ENCODE measurements at regions of chr3 and their contacts with region 1.

Region 1: DNA sequence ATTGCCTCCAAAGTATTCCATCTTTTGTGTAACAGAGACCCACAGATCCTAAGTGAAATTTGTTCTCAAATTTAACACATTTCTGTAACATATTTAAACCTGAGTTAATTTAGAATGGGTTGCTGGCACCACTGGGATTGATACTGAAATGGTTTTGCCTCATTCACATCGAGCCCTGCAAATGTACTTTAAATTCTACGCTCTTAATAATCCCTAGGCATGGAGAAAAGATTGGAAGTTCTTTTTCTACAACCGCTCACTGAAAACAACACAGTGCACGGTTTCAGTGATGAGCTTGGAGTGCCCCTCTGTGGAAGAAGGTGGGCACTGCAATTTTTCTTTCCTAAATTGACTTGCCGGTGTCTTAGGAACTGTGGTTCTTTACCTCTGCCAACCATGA is 109.9 kb upstream of the ATP11B start:
- DNase-seq: peak in 1 of 2 donors; percentile 62
- H3K4me3 ChIP-seq: no peak overlapping the region
- CTCF ChIP-seq: no peak
- POLR2A ChIP-seq: no peak

Region 2: GRCh38 chr3:181700168-181701087 is 983.0 kb before region 1 on chr3:
- intact Hi-C with region 1: loop called (anchors 10 kb)
- DNase-seq: no peak
- H3K4me3 ChIP-seq: no peak overlapping the region
- CTCF ChIP-seq: peak in 1 of 3 donors; percentile 20
- POLR2A ChIP-seq: no peak

Region 3: DNA sequence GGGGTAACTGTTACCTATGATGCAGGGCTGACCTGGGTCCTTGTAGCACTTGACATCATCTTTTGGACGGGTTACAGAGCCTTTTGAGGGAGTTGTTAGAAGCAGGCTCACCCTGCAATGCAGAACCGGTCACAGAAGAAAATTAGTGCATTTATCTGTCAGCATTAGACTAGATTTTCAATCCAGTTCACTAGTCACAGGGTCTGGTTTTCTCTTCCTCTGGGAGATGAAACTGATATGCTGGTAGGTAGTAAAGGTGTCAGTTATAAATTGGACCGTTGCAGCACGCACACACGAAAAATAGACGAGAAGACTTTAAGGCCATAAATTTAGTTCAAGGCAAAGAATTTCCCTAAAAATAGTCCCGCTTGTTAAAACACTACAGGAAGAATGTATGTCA is 422.4 kb before region 1 on chr3:
- intact Hi-C with region 1: loop called (anchors 10 kb)
- DNase-seq: no peak
- H3K4me3 ChIP-seq: no peak overlapping the region
- CTCF ChIP-seq: no peak
- POLR2A ChIP-seq: no peak